ENCODE measurements at regions of chr11 and their contacts with region 1.

Region 1: DNA sequence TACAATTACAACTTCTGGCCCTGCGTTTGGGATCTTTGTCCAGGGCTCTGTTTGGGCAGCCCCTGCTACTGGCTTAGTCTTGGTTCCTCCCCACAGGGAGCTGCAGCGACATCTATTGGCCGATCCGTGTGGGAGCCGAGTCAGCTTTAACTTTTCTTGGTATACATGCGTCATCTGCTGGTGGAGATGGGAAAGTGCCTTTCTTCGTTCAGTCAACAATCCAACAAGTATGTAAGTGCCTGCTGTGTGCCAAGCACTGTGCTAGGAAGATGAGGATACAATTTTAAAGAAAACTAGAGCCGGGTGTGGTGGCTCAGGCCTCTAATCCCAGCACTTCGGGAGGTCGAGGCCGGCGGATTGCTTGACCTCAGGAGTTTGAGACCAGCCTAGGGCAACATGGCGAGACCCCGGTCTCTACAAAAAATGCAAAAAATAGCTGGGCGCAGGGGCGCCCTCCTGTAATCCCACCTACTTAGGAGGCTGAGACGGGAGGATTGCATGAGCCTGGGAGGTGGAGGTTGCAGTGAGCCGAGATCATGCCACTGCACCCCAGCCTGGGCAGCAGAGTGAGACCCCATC is 8.2 kb downstream of the TPBGL start:
- DNase-seq: peak; percentile 93
- H3K4me3 ChIP-seq: no peak overlapping the region
- H3K27ac ChIP-seq: no peak overlapping the region
- H3K4me1 ChIP-seq: no peaks in the 10 kb centered on the region
- H3K27me3 ChIP-seq: peaks cover 2% of the 10 kb centered on the region
- CTCF ChIP-seq: peak; percentile 99

Region 2: GRCh38 chr11:75022759-75023396 is 225.9 kb before region 1 on chr11:
- intact Hi-C with region 1: loop called (anchors 2 kb)
- DNase-seq: peak; percentile 82
- H3K4me3 ChIP-seq: no peak overlapping the region
- H3K27ac ChIP-seq: no peak overlapping the region
- H3K4me1 ChIP-seq: no peaks in the 10 kb centered on the region
- H3K27me3 ChIP-seq: no peaks in the 10 kb centered on the region
- CTCF ChIP-seq: peak; percentile 100

Region 3: DNA sequence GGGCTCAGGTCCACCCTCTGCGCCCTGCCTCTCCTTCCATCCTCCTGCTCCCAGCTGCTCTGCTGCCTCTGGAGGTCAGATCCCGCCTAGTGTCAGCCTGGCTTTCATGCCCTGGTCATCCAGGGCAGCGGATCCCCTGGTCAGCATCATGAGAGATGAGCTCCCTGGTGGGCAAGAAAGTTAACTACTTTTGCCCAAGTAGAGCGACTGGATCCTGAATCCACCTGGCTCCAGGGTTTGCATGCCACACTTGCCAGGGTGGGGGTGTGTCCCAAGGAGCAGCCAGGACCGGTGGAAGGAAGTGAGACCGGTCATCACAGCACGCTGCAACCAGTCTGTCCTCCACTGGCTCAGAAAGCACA is 183.4 kb after region 1 on chr11:
- intact Hi-C with region 1: no loop called
- DNase-seq: peak; percentile 32
- H3K4me3 ChIP-seq: no peak overlapping the region
- H3K27ac ChIP-seq: no peak overlapping the region
- H3K4me1 ChIP-seq: peaks cover 10% of the 10 kb centered on the region
- H3K27me3 ChIP-seq: peaks cover 38% of the 10 kb centered on the region
- CTCF ChIP-seq: no peak

Measured in colonic mucosa (tissue), 4 donors.